ENCODE measurements at regions of chr11 and their contacts with region 1.

Region 1: GRCh38 chr11:61657566-61657965 is 22.6 kb upstream of the DAGLA start:
- DNase-seq: no peak
- ATAC-seq: no peak
- H3K4me3 ChIP-seq: no peak overlapping the region
- H3K27ac ChIP-seq: no peak overlapping the region
- H3K4me1 ChIP-seq: no peaks in the 10 kb centered on the region
- H3K27me3 ChIP-seq: peaks cover 30% of the 10 kb centered on the region
- CTCF ChIP-seq: no peak
- POLR2A ChIP-seq: no peak
- RAD21 ChIP-seq: no peak

Region 2: DNA sequence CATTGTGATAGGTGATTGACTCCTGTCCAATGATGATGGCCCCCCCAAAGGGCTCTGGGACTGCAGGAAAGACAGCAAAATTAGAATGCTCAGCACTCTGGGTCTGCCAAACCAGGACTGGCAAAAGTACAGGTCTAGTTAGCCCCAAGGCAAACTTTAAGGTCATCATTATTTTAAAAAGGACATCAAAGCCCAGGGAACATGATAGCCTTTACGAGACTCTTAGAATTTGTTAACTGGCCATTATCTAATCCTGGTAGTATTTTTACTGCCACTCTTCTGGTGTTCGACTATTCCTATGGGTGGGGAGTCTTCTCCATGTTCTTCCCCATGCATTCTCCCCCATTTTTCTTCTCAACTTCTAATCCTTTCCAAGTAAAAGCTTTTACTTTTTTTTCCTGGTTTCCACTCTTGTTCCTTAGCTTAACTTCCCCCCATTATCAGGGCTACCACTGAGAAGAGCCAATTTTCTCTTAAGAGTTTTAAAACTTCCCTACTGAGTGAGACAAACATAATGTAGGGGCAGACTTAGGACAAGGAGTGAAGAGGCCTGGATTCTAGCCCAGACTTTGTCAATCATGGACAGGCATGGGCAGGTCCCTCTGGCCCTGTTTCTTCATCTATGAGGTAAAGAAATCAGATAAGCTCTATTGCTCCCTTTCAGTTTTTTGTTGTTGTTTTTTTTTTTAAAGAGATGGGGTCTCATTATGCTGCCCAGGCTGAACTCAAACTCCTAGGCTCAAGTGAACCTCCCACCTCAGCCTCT is 331.7 kb before region 1 on chr11:
- CTCF ChIA-PET with region 1: interaction called, 10 read pairs
- POLR2A ChIA-PET with region 1: no interaction called
- dilution Hi-C with region 1: no loop called
- in situ Hi-C with region 1: no loop called
- intact Hi-C with region 1: no loop called
- DNase-seq: no peak
- ATAC-seq: no peak
- H3K4me3 ChIP-seq: no peak overlapping the region
- H3K27ac ChIP-seq: no peak overlapping the region
- H3K4me1 ChIP-seq: peaks cover 4% of the 10 kb centered on the region
- H3K27me3 ChIP-seq: no peaks in the 10 kb centered on the region
- CTCF ChIP-seq: no peak
- POLR2A ChIP-seq: no peak
- RAD21 ChIP-seq: no peak

Region 3: DNA sequence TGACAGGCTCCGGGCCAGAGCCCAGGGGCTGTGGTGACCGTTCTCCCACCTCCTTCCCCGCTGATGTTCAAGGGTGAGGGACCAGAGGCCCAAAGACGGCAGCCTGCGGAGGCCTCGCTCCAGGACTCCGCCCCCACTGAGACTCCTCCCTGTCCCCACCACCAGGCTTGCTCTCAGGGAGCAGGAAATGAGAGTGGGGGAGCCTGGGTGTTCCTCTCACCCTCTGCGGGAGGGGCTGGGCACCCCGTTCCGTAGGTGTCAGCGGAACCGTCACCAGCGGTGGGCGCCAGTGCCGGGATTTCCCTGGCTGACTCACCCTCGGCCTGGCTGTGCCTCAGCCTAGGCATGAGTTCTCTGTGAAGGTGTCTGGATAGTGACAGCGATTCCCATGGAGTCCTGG is 38.4 kb after region 1 on chr11:
- CTCF ChIA-PET with region 1: no interaction called
- POLR2A ChIA-PET with region 1: no interaction called
- dilution Hi-C with region 1: no loop called
- in situ Hi-C with region 1: no loop called
- intact Hi-C with region 1: no loop called
- DNase-seq: peak; percentile 81
- ATAC-seq: peak; percentile 77
- H3K4me3 ChIP-seq: no peak overlapping the region
- H3K27ac ChIP-seq: no peak overlapping the region
- H3K4me1 ChIP-seq: peaks cover 12% of the 10 kb centered on the region
- H3K27me3 ChIP-seq: peaks cover 9% of the 10 kb centered on the region; the same call in 1 of the 2 replicates
- CTCF ChIP-seq: 0 out of 2 replicates have a peak, but pooled peaks have one; percentile 9
- POLR2A ChIP-seq: no peak
- RAD21 ChIP-seq: peak; percentile 13; the same call in 1 of the 2 replicates